PC-9 (cell line): ENCODE measurements at regions of chr3 and their contacts with region 1.

Region 1: GRCh38 chr3:11335056-11335608 is 62.9 kb downstream of the ATG7 start:
- DNase-seq: peak; percentile 31 to 52
- H3K4me3 ChIP-seq: no peak overlapping the region
- H3K27ac ChIP-seq: no peak overlapping the region
- H3K4me1 ChIP-seq: peaks cover 8% of the 10 kb centered on the region
- H3K27me3 ChIP-seq: no peaks in the 10 kb centered on the region
- CTCF ChIP-seq: peak; percentile 83

Region 2: GRCh38 chr3:10758304-10759061 is 576.6 kb before region 1 on chr3:
- CTCF ChIA-PET with region 1: interaction called, 3 read pairs
- POLR2A ChIA-PET with region 1: no interaction called
- intact Hi-C with region 1: loop called (anchors 5 kb)
- DNase-seq: peak; percentile 40 to 45
- H3K4me3 ChIP-seq: no peak overlapping the region
- H3K27ac ChIP-seq: no peak overlapping the region
- H3K4me1 ChIP-seq: no peaks in the 10 kb centered on the region
- H3K27me3 ChIP-seq: peaks cover 31% of the 10 kb centered on the region
- CTCF ChIP-seq: peak; percentile 73

Region 3: GRCh38 chr3:11155341-11156025 is 179.6 kb before region 1 on chr3:
- CTCF ChIA-PET with region 1: no interaction called
- POLR2A ChIA-PET with region 1: no interaction called
- intact Hi-C with region 1: loop called (anchors 1 kb)
- DNase-seq: peak; percentile 62 to 74
- H3K4me3 ChIP-seq: peak overlapping the region; percentile 68
- H3K27ac ChIP-seq: no peak overlapping the region
- H3K4me1 ChIP-seq: peaks cover 12% of the 10 kb centered on the region; the same call in 1 of the 2 replicates
- H3K27me3 ChIP-seq: no peaks in the 10 kb centered on the region
- CTCF ChIP-seq: peak; percentile 76

Region 4: DNA sequence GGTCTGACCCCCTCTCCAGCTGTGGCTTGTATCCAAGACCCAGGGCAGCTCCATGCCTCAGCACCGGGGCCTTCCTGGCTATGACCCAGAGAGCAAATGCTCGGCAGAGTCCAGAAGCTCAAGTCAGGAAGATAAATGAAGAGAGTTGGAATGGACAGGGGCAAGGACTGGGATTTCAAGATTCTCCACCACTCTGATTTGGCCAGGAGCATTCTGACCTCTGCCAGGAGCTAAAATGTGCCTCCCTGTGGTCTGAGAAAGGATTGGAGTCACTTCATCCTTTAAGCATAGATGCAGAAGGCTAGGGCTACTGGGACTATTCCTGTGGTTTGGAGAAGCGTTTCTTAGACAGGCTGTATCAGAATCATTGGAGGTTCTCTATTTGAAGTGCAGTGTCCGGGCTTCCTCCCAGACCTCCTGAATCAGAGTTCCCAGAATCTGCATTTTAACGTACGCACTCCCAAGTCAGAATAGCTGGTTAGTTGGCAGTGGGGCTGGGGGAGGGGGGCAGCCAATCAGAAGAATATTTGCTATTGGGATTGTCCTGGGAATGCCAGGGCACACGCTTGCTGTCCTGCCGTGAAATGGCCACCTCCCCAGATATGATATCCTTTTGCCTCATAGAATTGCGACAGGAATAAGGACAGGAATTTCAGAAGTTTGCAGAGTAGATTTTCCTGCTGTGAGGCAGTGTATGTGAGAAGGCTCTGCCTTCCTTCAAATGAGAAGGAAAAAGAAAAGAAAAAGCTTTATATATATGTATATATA is 123.4 kb before region 1 on chr3:
- CTCF ChIA-PET with region 1: interaction called, 10 read pairs
- POLR2A ChIA-PET with region 1: no interaction called
- intact Hi-C with region 1: no loop called
- DNase-seq: no peak
- H3K4me3 ChIP-seq: no peak overlapping the region
- H3K27ac ChIP-seq: peak overlapping the region; percentile 41; the same call in 1 of the 2 replicates
- H3K4me1 ChIP-seq: peaks cover 35% of the 10 kb centered on the region
- H3K27me3 ChIP-seq: no peaks in the 10 kb centered on the region
- CTCF ChIP-seq: no peak